CD8-positive, alpha-beta T cell (primary cell): ENCODE measurements at regions of chr19 and their contacts with region 1.

Region 1: DNA sequence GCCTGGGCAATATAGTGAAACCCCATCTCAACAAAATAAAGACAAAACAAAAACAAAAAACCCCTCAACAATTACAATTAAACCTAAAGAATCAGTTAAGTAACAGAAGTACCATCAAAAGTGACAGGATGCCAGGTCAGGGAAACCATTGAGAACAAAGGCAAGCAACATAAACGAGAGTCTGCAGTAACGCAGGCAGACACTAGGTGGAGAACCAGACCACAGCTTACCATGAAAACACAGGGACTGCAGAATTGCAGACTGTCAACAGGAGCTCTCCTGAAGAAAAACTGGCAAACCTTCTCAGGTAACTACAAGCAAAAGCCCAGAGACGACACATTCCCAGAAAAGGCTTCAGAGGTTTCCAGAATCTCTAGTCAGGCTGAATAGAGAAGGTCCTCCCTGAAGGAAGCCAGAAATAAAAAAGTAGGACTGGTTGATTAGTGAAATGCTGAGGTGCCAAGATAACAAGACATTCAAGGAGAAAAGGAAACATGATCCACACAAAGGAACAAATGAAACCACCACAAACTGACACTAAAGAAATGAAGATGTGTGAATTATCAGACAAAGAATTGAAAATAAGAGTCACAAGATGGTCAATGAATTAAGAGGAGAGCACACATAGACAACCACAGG is 2.2 kb upstream of the ZNF665 start:
- DNase-seq: peak; percentile 48 to 86 (median 75)
- ATAC-seq: peak; percentile 50
- H3K4me3 ChIP-seq: no peak overlapping the region
- H3K4me3 Mint-ChIP-seq: peak overlapping the region; percentile 19
- H3K27ac ChIP-seq: no peak overlapping the region
- H3K27ac Mint-ChIP-seq: peak overlapping the region; percentile 24
- H3K4me1 ChIP-seq: peaks cover 16% of the 10 kb centered on the region
- H3K4me1 Mint-ChIP-seq: peaks cover 48% of the 10 kb centered on the region
- H3K27me3 ChIP-seq: no peaks in the 10 kb centered on the region
- H3K27me3 Mint-ChIP-seq: no peaks in the 10 kb centered on the region
- CTCF ChIP-seq: peak; percentile 90

Region 2: DNA sequence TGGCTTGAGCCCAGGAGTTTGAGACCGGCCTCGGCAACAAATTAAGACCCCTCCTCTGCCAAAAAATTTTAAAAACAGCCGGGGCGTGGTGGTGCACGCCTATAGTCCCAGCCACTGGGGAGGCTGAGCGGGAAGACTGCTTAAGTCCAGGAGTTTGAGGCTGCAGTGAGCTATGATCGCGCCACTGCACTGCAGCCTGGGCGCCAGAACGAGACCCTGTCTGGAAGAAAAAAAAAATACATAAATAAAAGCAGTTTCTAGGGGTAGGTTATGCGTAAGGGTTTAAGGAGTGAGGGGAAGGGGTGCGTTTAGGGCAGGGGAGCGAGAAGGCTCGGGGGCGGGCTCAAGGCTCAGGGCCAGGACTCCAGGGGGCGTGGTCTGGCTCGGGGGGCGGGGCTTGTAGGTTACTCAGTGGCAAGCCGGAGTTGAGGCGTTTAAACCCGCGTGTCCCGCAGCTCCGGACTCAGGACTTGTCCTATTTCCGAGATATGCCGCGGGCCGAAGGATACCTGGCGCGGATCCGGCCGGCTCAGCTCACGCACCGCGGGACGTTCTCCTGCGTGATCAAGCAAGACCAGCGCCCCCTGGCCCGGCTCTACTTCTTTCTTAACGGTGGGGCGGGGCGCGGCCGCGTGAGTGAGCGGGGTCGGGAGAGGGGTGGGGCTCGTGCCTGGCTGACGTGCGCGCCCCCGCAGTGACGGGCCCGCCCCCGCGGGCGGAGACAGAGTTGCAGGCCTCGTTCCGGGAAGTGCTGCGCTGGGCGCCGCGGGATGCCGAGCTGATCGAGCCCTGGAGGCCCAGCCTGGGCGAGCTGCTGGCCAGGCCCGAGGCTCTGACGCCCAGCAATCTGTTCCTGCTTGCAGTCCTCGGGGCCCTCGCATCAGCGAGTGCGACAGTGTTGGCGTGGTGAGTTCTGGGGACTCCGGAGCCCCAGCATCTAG is 1491.5 kb before region 1 on chr19:
- CTCF ChIA-PET with region 1: no interaction called
- POLR2A ChIA-PET with region 1: no interaction called
- intact Hi-C with region 1: loop called in 1 of 2 experiments (anchors 10 kb)
- DNase-seq: peak; percentile 91 to 99 (median 97)
- ATAC-seq: peak; percentile 91
- H3K4me3 ChIP-seq: peak overlapping the region; percentile 89 to 98
- H3K4me3 Mint-ChIP-seq: peak overlapping the region; percentile 89
- H3K27ac ChIP-seq: peak overlapping the region; percentile 88 to 92
- H3K27ac Mint-ChIP-seq: peak overlapping the region; percentile 89
- H3K4me1 ChIP-seq: peaks cover 25% of the 10 kb centered on the region
- H3K4me1 Mint-ChIP-seq: peaks cover 35% of the 10 kb centered on the region
- H3K27me3 ChIP-seq: no peaks in the 10 kb centered on the region
- H3K27me3 Mint-ChIP-seq: no peaks in the 10 kb centered on the region
- CTCF ChIP-seq: peak; percentile 56

Region 3: GRCh38 chr19:52962394-52963246 is 232.8 kb before region 1 on chr19 and contains the start of gene ZNF816:
- CTCF ChIA-PET with region 1: no interaction called
- POLR2A ChIA-PET with region 1: no interaction called
- intact Hi-C with region 1: loop called (anchors 5 kb)
- DNase-seq: peak; percentile 98 to 99 (median 99)
- ATAC-seq: peak; percentile 99
- H3K4me3 ChIP-seq: peak within 1 kb of the TSS; percentile 76 to 77
- H3K4me3 Mint-ChIP-seq: peak within 1 kb of the TSS; percentile 94
- H3K27ac ChIP-seq: peak within 1 kb of the TSS; percentile 61 to 67
- H3K27ac Mint-ChIP-seq: peak within 1 kb of the TSS; percentile 95
- H3K4me1 ChIP-seq: peaks cover 9% of the 10 kb centered on the region
- H3K4me1 Mint-ChIP-seq: peaks cover 31% of the 10 kb centered on the region
- H3K27me3 ChIP-seq: no peaks in the 10 kb centered on the region
- H3K27me3 Mint-ChIP-seq: no peaks in the 10 kb centered on the region
- CTCF ChIP-seq: no peak
- total RNA-seq, gene ZNF816: 5.9 to 6.4 TPM

Region 4: GRCh38 chr19:53158119-53158656 is 37.2 kb before region 1 on chr19:
- CTCF ChIA-PET with region 1: interaction called, 4 read pairs
- POLR2A ChIA-PET with region 1: no interaction called
- intact Hi-C with region 1: loop called (anchors 1 to 5 kb)
- DNase-seq: peak in 7 of 9 experiments; percentile 4 to 63 (median 47)
- ATAC-seq: peak; percentile 42
- H3K4me3 ChIP-seq: peak overlapping the region; percentile 59 to 60
- H3K4me3 Mint-ChIP-seq: peak overlapping the region; percentile 77
- H3K27ac ChIP-seq: peak overlapping the region; percentile 44 to 52
- H3K27ac Mint-ChIP-seq: peak overlapping the region; percentile 79
- H3K4me1 ChIP-seq: peaks cover 13% of the 10 kb centered on the region
- H3K4me1 Mint-ChIP-seq: peaks cover 23% of the 10 kb centered on the region
- H3K27me3 ChIP-seq: no peaks in the 10 kb centered on the region
- H3K27me3 Mint-ChIP-seq: no peaks in the 10 kb centered on the region
- CTCF ChIP-seq: no peak

Region 5: GRCh38 chr19:53333463-53334449 is 138.4 kb after region 1 on chr19 and contains the start of gene ZNF845:
- CTCF ChIA-PET with region 1: no interaction called
- POLR2A ChIA-PET with region 1: no interaction called
- intact Hi-C with region 1: loop called (anchors 1 kb)
- DNase-seq: peak; percentile 93 to 98 (median 96)
- ATAC-seq: peak; percentile 98
- H3K4me3 ChIP-seq: peak within 1 kb of the TSS; percentile 81 to 98
- H3K4me3 Mint-ChIP-seq: peak within 1 kb of the TSS; percentile 92
- H3K27ac ChIP-seq: peak within 1 kb of the TSS; percentile 66 to 83
- H3K27ac Mint-ChIP-seq: peak within 1 kb of the TSS; percentile 81
- H3K4me1 ChIP-seq: no peaks in the 10 kb centered on the region
- H3K4me1 Mint-ChIP-seq: peaks cover 31% of the 10 kb centered on the region
- H3K27me3 ChIP-seq: peaks cover 0 to 4% of the 10 kb centered on the region in 2 experiments
- H3K27me3 Mint-ChIP-seq: peaks cover 3% of the 10 kb centered on the region
- CTCF ChIP-seq: no peak
- total RNA-seq, gene ZNF845: 10.9 to 11.7 TPM

Region 6: GRCh38 chr19:53365134-53365898 is 169.9 kb after region 1 on chr19 and contains the start of gene ZNF525:
- CTCF ChIA-PET with region 1: interaction called, 23 read pairs
- POLR2A ChIA-PET with region 1: no interaction called
- intact Hi-C with region 1: loop called (anchors 1 kb)
- DNase-seq: peak; percentile 95 to 99 (median 97)
- ATAC-seq: peak; percentile 100
- H3K4me3 ChIP-seq: peak within 1 kb of the TSS; percentile 85 to 99
- H3K4me3 Mint-ChIP-seq: peak within 1 kb of the TSS; percentile 96
- H3K27ac ChIP-seq: peak within 1 kb of the TSS; percentile 86 to 91
- H3K27ac Mint-ChIP-seq: peak within 1 kb of the TSS; percentile 99
- H3K4me1 ChIP-seq: peaks cover 9% of the 10 kb centered on the region
- H3K4me1 Mint-ChIP-seq: peaks cover 29% of the 10 kb centered on the region
- H3K27me3 ChIP-seq: no peaks in the 10 kb centered on the region
- H3K27me3 Mint-ChIP-seq: no peaks in the 10 kb centered on the region
- CTCF ChIP-seq: peak; percentile 54
- total RNA-seq, gene ZNF525: 25.6 to 26.4 TPM

Region 7: GRCh38 chr19:53431399-53432087 is 236.2 kb after region 1 on chr19 and contains the start of gene ZNF761:
- CTCF ChIA-PET with region 1: no interaction called
- POLR2A ChIA-PET with region 1: no interaction called
- intact Hi-C with region 1: loop called (anchors 1 kb)
- DNase-seq: peak; percentile 95 to 100 (median 97)
- ATAC-seq: peak; percentile 99
- H3K4me3 ChIP-seq: peak within 1 kb of the TSS; percentile 71 to 85
- H3K4me3 Mint-ChIP-seq: peak within 1 kb of the TSS; percentile 98
- H3K27ac ChIP-seq: peak within 1 kb of the TSS; percentile 79 to 84
- H3K27ac Mint-ChIP-seq: peak within 1 kb of the TSS; percentile 97
- H3K4me1 ChIP-seq: peaks cover 11% of the 10 kb centered on the region
- H3K4me1 Mint-ChIP-seq: peaks cover 41% of the 10 kb centered on the region
- H3K27me3 ChIP-seq: no peaks in the 10 kb centered on the region
- H3K27me3 Mint-ChIP-seq: no peaks in the 10 kb centered on the region
- CTCF ChIP-seq: peak; percentile 47
- total RNA-seq, gene ZNF761: 8.4 to 9.2 TPM